Caco-2 (cell line): ENCODE measurements at regions of chr12 and their contacts with region 1.

Region 1: GRCh38 chr12:62259993-62260732 is at the start of gene USP15:
- DNase-seq: peak; percentile 97 to 99
- H3K4me3 ChIP-seq: peak within 1 kb of the TSS; percentile 84
- H3K4me3 Mint-ChIP-seq: peak within 1 kb of the TSS; percentile 82
- H3K27ac Mint-ChIP-seq: peak within 1 kb of the TSS; percentile 94
- H3K4me1 ChIP-seq: no peaks in the 10 kb centered on the region; the same call in 1 of the 2 replicates
- H3K4me1 Mint-ChIP-seq: no peaks in the 10 kb centered on the region
- H3K27me3 ChIP-seq: no peaks in the 10 kb centered on the region
- H3K27me3 Mint-ChIP-seq: no peaks in the 10 kb centered on the region
- CTCF ChIP-seq: peak; percentile 75 to 92
- total RNA-seq, gene USP15: 42.9 and 43.5 TPM in 2 replicates

Region 2: DNA sequence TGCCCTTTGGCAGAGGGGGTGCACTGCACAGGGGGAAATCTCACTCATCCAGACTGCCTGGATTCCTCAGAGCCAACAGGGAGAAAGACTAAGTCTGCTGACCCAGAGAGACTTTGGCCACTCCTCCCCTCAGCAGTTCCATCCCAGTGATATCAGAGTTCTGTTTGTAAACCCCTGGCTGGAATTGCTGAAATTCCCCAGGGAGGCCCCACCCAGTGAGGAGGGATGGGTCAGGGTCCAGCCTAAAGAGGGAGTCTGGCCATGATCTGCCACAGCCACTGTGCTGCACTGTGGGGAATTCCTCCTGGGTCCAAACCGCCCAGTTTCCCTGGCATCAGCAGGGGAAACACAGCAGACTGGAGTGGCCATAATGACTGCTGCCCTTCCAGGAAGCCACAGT is 54.8 kb before region 1 on chr12:
- CTCF ChIA-PET with region 1: no interaction called
- POLR2A ChIA-PET with region 1: no interaction called
- intact Hi-C with region 1: loop called (anchors 1 kb)
- DNase-seq: peak; percentile 81 to 86
- H3K4me3 ChIP-seq: no peak overlapping the region
- H3K4me3 Mint-ChIP-seq: peak overlapping the region; percentile 42
- H3K27ac Mint-ChIP-seq: peak overlapping the region; percentile 82
- H3K4me1 ChIP-seq: peaks cover 19% of the 10 kb centered on the region
- H3K4me1 Mint-ChIP-seq: no peaks in the 10 kb centered on the region
- H3K27me3 ChIP-seq: no peaks in the 10 kb centered on the region
- H3K27me3 Mint-ChIP-seq: no peaks in the 10 kb centered on the region
- CTCF ChIP-seq: no peak

Region 3: DNA sequence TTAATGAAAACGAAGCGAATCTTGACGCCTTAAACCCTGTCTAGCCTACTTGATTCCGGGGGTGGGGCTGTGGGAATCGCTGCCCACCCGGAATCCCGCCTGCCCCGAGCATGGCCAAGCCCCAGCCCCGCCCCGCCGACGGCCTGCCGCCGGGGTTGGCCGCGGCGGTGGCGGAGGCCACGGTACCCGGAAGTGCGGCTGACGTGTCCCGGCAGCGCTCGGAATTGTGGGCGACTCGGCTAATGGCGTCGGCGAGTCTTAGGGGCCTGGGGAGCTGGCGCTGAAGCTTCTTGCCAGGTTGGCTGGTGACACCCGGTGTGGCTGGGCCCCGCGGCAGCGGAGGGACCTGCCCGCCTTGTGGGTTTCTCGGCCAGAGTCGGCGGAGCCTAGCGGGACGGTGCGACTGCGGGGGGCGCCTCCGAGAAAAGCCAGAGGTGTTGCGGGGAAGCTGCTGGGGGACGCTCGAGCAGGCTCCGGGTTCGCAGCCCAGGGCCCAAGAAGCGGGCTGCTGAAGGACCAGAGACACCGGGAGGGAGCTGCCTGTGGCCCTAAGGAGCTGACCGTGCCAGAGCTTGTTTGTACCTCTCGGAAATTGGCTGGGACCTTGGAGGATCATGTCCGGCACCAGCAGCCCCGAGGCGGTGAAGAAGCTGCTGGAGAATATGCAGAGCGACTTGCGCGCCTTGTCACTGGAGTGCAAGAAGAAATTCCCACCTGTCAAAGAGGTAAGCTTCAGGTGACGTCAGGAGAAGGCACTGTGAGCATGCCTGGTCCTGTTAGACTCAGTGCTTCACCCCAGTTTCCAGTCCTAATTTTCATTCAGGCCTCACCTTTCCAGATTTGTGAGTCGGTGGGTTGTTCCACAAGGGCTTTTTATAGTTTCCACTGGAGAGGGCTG is 206.7 kb after region 1 on chr12 and contains the start of gene MON2:
- CTCF ChIA-PET with region 1: no interaction called
- POLR2A ChIA-PET with region 1: no interaction called
- intact Hi-C with region 1: loop called (anchors 10 kb)
- DNase-seq: peak; percentile 81 to 90
- H3K4me3 ChIP-seq: peak within 1 kb of the TSS; percentile 82
- H3K4me3 Mint-ChIP-seq: peak within 1 kb of the TSS; percentile 92
- H3K27ac Mint-ChIP-seq: peak within 1 kb of the TSS; percentile 75
- H3K4me1 ChIP-seq: no peaks in the 10 kb centered on the region
- H3K4me1 Mint-ChIP-seq: no peaks in the 10 kb centered on the region
- H3K27me3 ChIP-seq: no peaks in the 10 kb centered on the region
- H3K27me3 Mint-ChIP-seq: no peaks in the 10 kb centered on the region
- CTCF ChIP-seq: no peak
- total RNA-seq, gene MON2: 30.7 and 30.8 TPM in 2 replicates